Endothelial cell of umbilical vein (primary cell): ENCODE measurements at regions of chr1 and their contacts with region 1.

Region 1: GRCh38 chr1:47725992-47726855 is 271.0 kb downstream of the TRABD2B start:
- DNase-seq: peak; percentile 74
- H3K4me3 ChIP-seq: no peak overlapping the region
- H3K27ac ChIP-seq: no peak overlapping the region
- H3K4me1 ChIP-seq: no peaks in the 10 kb centered on the region
- H3K27me3 ChIP-seq: peaks cover 34 to 37% of the 10 kb centered on the region in 2 experiments
- CTCF ChIP-seq: peak; percentile 83 to 95
- POLR2A ChIP-seq: no peak

Region 2: DNA sequence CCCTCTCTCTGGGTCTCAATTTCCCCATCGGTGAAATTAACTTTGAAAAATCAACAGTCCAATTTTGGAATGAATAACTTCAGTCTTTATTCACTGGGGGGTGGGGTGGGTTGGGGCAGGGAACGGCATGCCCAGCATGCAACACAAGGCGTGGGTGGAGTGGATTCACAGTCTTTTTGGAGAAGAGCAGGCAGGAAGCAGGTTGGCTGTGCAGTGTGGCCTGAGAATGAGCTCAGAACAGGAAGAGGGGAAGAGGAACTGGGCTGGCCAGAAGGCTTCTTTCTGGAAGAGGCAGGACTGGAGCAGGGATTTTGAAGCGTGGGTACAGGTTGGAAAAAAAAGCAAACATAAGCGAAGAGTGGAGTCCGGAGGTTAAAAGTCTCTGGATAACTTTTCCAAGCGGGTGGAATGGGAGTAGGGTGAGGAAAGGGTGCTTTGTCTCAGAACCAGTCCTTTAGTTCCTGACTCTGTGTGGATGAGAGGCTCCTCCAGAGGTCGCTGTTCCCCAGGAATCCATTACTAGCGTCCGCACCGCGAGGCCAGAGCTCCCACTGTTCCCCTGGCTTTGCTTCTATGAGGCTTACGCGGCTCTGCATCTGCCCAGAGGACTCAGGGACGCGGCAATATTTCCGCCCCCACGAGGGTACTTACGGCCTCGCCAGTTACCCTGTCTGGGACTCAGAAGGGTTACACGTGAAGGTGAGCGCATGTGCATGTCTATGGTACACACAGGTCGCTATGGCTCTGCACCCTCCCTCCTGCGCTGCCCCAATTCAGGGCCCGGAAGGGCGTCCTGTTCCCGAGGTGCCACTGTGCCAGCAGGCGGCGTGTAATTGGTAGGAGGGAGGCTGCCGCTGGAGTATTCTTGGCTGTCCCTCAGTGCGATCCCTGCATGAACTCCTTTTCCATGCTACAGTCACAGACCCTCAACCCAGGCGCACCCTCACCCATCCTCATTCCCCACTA is 293.9 kb before region 1 on chr1:
- CTCF ChIA-PET with region 1: interaction called, 691 read pairs
- POLR2A ChIA-PET with region 1: interaction called, 3 read pairs
- dilution Hi-C with region 1: no loop called
- intact Hi-C with region 1: loop called (anchors 1 kb)
- DNase-seq: peak; percentile 80
- H3K4me3 ChIP-seq: no peak overlapping the region
- H3K27ac ChIP-seq: no peak overlapping the region
- H3K4me1 ChIP-seq: peaks cover 24% of the 10 kb centered on the region
- H3K27me3 ChIP-seq: peaks cover 10 to 18% of the 10 kb centered on the region in 2 experiments
- CTCF ChIP-seq: peak; percentile 80 to 83
- POLR2A ChIP-seq: no peak

Region 3: GRCh38 chr1:47507881-47508701 is 218.1 kb before region 1 on chr1:
- CTCF ChIA-PET with region 1: interaction called, 11 read pairs
- POLR2A ChIA-PET with region 1: no interaction called
- dilution Hi-C with region 1: no loop called
- intact Hi-C with region 1: no loop called
- DNase-seq: no peak
- H3K4me3 ChIP-seq: no peak overlapping the region
- H3K27ac ChIP-seq: no peak overlapping the region
- H3K4me1 ChIP-seq: no peaks in the 10 kb centered on the region
- H3K27me3 ChIP-seq: peaks cover 44% of the 10 kb centered on the region in 2 experiments
- CTCF ChIP-seq: no peak
- POLR2A ChIP-seq: no peak

Region 4: DNA sequence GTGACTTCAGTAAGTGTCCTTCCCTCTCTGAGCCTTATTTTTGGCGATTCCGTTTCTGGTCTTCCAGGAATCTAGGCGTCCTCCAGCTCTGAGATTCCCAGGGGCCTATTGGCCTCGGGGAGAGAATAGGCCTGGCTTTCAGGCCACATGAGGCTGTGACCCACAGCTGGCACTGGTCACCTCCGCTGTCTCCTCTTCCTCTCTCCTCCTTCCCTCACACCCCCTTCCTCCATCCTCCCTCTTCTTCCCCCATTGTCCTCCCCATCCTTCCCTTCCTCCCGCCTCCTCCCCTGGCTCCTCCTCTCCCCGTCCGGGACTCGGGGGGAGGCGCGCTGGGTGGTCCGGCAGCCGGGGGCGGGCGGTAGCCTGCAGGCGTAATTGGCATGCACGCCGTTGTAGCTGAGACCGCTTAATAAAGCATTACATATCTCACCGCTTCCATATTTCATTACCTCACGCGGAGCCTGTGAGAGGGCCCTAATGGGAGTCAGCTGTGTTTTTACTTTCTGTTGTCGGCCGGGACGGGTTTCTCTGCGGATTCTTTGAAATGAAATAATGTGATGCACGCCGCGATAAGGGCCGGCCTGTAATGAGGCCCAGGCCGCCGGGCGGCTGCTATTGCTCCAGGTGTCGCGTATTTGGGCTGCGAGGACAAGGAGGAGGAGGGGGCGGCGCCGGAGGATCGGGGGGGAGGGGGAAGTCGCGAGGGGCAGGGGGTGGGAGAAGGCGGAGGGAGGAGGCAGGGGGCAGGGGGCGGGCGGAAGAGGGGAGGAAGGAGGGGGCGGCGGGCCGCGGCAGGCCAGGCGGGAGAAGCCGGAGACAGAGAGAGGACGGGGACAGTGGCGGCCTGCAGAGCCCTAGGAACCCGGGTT is 193.1 kb before region 1 on chr1:
- CTCF ChIA-PET with region 1: interaction called, 171 read pairs
- POLR2A ChIA-PET with region 1: no interaction called
- dilution Hi-C with region 1: no loop called
- intact Hi-C with region 1: no loop called
- DNase-seq: peak; percentile 66
- H3K4me3 ChIP-seq: peak overlapping the region in 1 of 3 experiments; percentile 33
- H3K27ac ChIP-seq: no peak overlapping the region
- H3K4me1 ChIP-seq: no peaks in the 10 kb centered on the region
- H3K27me3 ChIP-seq: peaks cover 12 to 17% of the 10 kb centered on the region in 2 experiments
- CTCF ChIP-seq: no peak
- POLR2A ChIP-seq: no peak

Region 5: GRCh38 chr1:47644212-47644573 is 82.0 kb before region 1 on chr1:
- CTCF ChIA-PET with region 1: no interaction called
- POLR2A ChIA-PET with region 1: no interaction called
- dilution Hi-C with region 1: no loop called
- intact Hi-C with region 1: no loop called
- DNase-seq: no peak
- H3K4me3 ChIP-seq: no peak overlapping the region
- H3K27ac ChIP-seq: no peak overlapping the region
- H3K4me1 ChIP-seq: no peaks in the 10 kb centered on the region
- H3K27me3 ChIP-seq: no peaks in the 10 kb centered on the region
- CTCF ChIP-seq: no peak
- POLR2A ChIP-seq: no peak

Region 6: DNA sequence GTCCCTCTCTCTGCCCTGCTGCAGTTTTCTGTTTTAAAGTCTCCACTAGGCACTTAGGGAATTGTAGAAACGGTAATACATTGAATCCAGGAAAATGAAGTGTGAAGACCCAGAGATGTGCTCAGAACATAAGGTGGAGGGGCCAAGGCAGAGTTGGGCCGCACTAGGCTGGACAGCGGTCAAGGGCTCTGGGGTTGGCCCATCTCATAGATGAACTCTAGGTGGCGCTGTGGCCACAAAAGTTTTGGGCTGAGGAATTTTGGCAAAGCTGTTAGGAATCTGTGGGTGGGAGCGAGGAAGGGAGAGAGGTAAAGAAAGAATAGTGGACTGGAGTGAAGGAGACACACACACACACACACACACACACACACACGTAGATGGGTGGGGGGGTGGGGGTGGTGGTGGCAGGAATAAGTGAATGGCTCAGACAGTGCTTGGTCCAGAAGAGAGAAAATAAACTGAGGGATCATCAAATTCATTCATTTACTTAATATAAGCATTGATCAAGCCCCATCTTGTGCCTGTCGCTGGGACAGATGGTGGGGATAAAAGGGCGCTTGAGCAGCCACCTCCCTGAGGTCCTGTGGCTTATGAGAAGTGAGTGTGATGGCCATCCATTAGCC is 12.4 kb after region 1 on chr1:
- CTCF ChIA-PET with region 1: interaction called, 36 read pairs
- POLR2A ChIA-PET with region 1: no interaction called
- dilution Hi-C with region 1: no loop called
- intact Hi-C with region 1: no loop called
- DNase-seq: peak; percentile 42
- H3K4me3 ChIP-seq: no peak overlapping the region
- H3K27ac ChIP-seq: no peak overlapping the region
- H3K4me1 ChIP-seq: no peaks in the 10 kb centered on the region
- H3K27me3 ChIP-seq: peaks cover 8 to 13% of the 10 kb centered on the region in 2 experiments
- CTCF ChIP-seq: peak; percentile 61 to 84
- POLR2A ChIP-seq: no peak

Region 7: DNA sequence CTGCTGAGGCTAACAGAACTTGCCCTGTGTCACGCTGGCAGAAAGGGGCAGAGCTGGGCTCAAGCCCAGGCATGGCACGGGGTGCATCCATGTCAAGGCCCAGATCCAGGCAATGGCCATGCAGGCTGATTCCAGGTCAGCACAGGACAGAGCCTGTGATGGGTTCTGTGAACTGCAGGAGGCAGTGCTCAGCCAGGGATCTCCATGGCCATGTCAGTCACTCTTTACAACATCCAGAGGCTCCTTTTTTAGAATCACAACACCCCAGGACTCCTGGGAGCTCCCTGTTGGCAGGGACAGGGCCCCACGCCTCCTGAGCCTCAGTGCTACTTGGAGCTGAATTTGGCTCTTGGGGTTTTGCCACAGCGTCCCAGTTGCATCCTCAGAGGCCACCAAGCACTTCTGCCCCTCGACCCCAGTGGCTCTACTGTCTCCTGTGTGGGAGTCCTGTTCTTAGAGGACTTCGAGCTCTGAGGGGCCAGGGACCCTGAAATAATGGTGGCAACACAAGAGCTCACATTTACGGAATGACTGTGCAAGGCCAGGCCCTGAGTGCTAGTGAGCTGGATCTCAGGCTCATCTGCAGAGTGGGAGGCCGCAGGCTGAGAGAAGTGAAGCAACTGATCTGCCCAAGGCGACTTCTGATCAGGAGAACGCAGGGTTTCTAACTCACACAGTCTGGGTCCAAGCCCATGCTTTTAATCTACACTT is 59.5 kb after region 1 on chr1:
- CTCF ChIA-PET with region 1: no interaction called
- POLR2A ChIA-PET with region 1: no interaction called
- dilution Hi-C with region 1: no loop called
- intact Hi-C with region 1: no loop called
- DNase-seq: no peak
- H3K4me3 ChIP-seq: no peak overlapping the region
- H3K27ac ChIP-seq: no peak overlapping the region
- H3K4me1 ChIP-seq: no peaks in the 10 kb centered on the region
- H3K27me3 ChIP-seq: peaks cover 0 to 2% of the 10 kb centered on the region in 2 experiments
- CTCF ChIP-seq: peak in 1 of 2 donors; percentile 5
- POLR2A ChIP-seq: no peak